Colonic mucosa (tissue), 4 donors: ENCODE measurements at regions of chr9 and their contacts with region 1.

Region 1: GRCh38 chr9:70419546-70420266 is 5.2 kb upstream of the KLF9 start:
- DNase-seq: peak; percentile 95
- H3K4me3 ChIP-seq: peak overlapping the region; percentile 52
- H3K27ac ChIP-seq: peak overlapping the region; percentile 98
- H3K4me1 ChIP-seq: peaks cover 14% of the 10 kb centered on the region
- H3K27me3 ChIP-seq: no peaks in the 10 kb centered on the region
- CTCF ChIP-seq: no peak

Region 2: GRCh38 chr9:70466976-70467561 is 47.4 kb after region 1 on chr9:
- intact Hi-C with region 1: loop called (anchors 5 kb)
- DNase-seq: no peak
- H3K4me3 ChIP-seq: no peak overlapping the region
- H3K27ac ChIP-seq: no peak overlapping the region
- H3K4me1 ChIP-seq: peaks cover 8% of the 10 kb centered on the region
- H3K27me3 ChIP-seq: no peaks in the 10 kb centered on the region
- CTCF ChIP-seq: no peak